Activated CD8-positive, alpha-beta T cell treated with anti-CD3 and anti-CD28 coated beads, Interleukin-2, amount 10 ng/mL, durations not matched to agents 7 days and 5 days (primary cell): ENCODE measurements at regions of chr5 and their contacts with region 1.

Region 1: GRCh38 chr5:119274767-119275130 is 81.1 kb upstream of the TNFAIP8 start:
- DNase-seq: no peak
- ATAC-seq: peak; percentile 35
- H3K4me3 Mint-ChIP-seq: peak overlapping the region; percentile 75
- H3K27ac Mint-ChIP-seq: peak overlapping the region; percentile 87
- H3K4me1 Mint-ChIP-seq: peaks cover 88% of the 10 kb centered on the region
- H3K27me3 Mint-ChIP-seq: peaks cover 2% of the 10 kb centered on the region

Region 2: DNA sequence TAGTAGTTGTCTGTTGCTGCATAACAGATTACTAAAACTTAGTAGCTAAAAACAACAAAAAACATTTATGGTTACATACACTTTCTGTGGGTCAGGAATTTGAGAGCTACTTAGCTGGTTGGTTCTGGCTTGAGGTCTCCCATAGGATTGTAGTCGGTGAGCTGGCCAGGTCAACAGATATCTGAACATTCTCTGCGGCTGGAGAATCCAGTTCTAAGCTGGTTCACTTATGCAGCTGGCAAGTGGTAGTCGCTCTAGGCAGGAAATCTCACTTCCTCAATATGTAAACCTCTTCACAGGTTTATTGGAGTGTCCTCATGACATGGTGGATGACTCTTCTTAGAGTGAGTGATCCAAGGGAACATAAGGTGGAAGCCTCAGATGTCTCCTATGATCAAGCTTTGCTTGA is 15.4 kb after region 1 on chr5:
- CTCF ChIA-PET with region 1: interaction called, 52 read pairs
- POLR2A ChIA-PET with region 1: interaction called, 11 read pairs
- DNase-seq: no peak
- ATAC-seq: peak; percentile 34
- H3K4me3 Mint-ChIP-seq: peak overlapping the region; percentile 48
- H3K27ac Mint-ChIP-seq: peak overlapping the region; percentile 94
- H3K4me1 Mint-ChIP-seq: peaks cover 90% of the 10 kb centered on the region
- H3K27me3 Mint-ChIP-seq: no peaks in the 10 kb centered on the region

Region 3: GRCh38 chr5:119302916-119303897 is 28.5 kb after region 1 on chr5:
- CTCF ChIA-PET with region 1: interaction called, 10 read pairs
- POLR2A ChIA-PET with region 1: interaction called, 3 read pairs
- DNase-seq: peak; percentile 19
- ATAC-seq: peak; percentile 44
- H3K4me3 Mint-ChIP-seq: no peak overlapping the region
- H3K27ac Mint-ChIP-seq: peak overlapping the region; percentile 73
- H3K4me1 Mint-ChIP-seq: peaks cover 95% of the 10 kb centered on the region
- H3K27me3 Mint-ChIP-seq: no peaks in the 10 kb centered on the region

Region 4: GRCh38 chr5:119335261-119335677 is 60.5 kb after region 1 on chr5:
- CTCF ChIA-PET with region 1: interaction called, 12 read pairs
- POLR2A ChIA-PET with region 1: interaction called, 10 read pairs
- DNase-seq: no peak
- ATAC-seq: no peak
- H3K4me3 Mint-ChIP-seq: peak overlapping the region; percentile 80
- H3K27ac Mint-ChIP-seq: peak overlapping the region; percentile 86
- H3K4me1 Mint-ChIP-seq: peaks cover 86% of the 10 kb centered on the region
- H3K27me3 Mint-ChIP-seq: no peaks in the 10 kb centered on the region

Region 5: GRCh38 chr5:119570910-119571309 is 296.2 kb after region 1 on chr5:
- CTCF ChIA-PET with region 1: no interaction called
- POLR2A ChIA-PET with region 1: no interaction called
- DNase-seq: no peak
- ATAC-seq: no peak
- H3K4me3 Mint-ChIP-seq: no peak overlapping the region
- H3K27ac Mint-ChIP-seq: no peak overlapping the region
- H3K4me1 Mint-ChIP-seq: no peaks in the 10 kb centered on the region
- H3K27me3 Mint-ChIP-seq: no peaks in the 10 kb centered on the region